ENCODE measurements at regions of chr5 and their contacts with region 1.

Region 1: DNA sequence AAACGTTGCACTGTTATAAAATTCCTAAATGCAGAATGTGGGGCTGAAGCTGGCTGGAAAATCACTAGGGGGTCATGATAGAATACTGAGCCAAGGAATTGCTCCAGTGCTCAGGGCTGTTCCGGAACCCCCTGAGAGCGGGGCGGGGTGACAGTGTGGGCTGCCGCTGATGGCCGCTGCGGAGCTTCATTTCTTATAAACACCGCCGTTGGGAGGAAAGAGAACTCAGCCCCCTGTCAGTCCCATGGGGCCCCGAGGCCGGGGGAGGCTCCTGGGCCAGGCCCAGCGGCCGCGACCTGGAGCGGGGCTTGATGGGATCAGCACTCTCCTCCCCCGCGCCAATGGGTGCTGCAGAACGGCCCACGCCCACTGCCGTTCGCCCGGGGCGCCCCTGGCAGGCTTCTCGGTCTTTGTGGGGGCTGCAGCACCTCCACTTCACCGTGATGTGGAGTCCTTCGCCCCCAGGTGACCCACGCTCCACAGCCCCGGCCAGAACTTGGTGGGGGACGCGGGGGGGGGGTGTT is 5.2 kb upstream of the IRF1 start:
- DNase-seq: peak; percentile 84
- H3K4me3 ChIP-seq: peak overlapping the region; percentile 69 to 78
- H3K27ac ChIP-seq: peak overlapping the region; percentile 96
- H3K4me1 ChIP-seq: peaks cover 24 to 29% of the 10 kb centered on the region in 2 experiments
- H3K27me3 ChIP-seq: no peaks in the 10 kb centered on the region
- CTCF ChIP-seq: 0 out of 2 replicates have a peak, but pooled peaks have one; percentile 11
- EP300 ChIP-seq: peak in 1 of 2 experiments; percentile 7; a peak in 1 of 4 replicates
- RAD21 ChIP-seq: no peak

Region 2: GRCh38 chr5:132386644-132387286 is 109.0 kb before region 1 on chr5:
- CTCF ChIA-PET with region 1: interaction called, 189 read pairs
- POLR2A ChIA-PET with region 1: no interaction called
- DNase-seq: peak; percentile 71
- H3K4me3 ChIP-seq: no peak overlapping the region
- H3K27ac ChIP-seq: peak overlapping the region; percentile 90; a peak in 3 of 4 replicates
- H3K4me1 ChIP-seq: peaks cover 26 to 32% of the 10 kb centered on the region in 2 experiments
- H3K27me3 ChIP-seq: no peaks in the 10 kb centered on the region
- CTCF ChIP-seq: peak; percentile 79
- EP300 ChIP-seq: no peak
- RAD21 ChIP-seq: peak; percentile 87

Region 3: GRCh38 chr5:132410451-132411381 is 85.0 kb before region 1 on chr5:
- CTCF ChIA-PET with region 1: interaction called, 95 read pairs
- POLR2A ChIA-PET with region 1: interaction called, 6 read pairs
- DNase-seq: peak; percentile 95
- H3K4me3 ChIP-seq: peak overlapping the region; percentile 71 to 76
- H3K27ac ChIP-seq: peak overlapping the region; percentile 81 to 89
- H3K4me1 ChIP-seq: peaks cover 19 to 26% of the 10 kb centered on the region in 2 experiments
- H3K27me3 ChIP-seq: no peaks in the 10 kb centered on the region
- CTCF ChIP-seq: peak; percentile 62
- EP300 ChIP-seq: 0 out of 4 replicates have a peak, but pooled peaks of 1 of the 2 experiments have one; percentile 6
- RAD21 ChIP-seq: peak; percentile 52

Region 4: GRCh38 chr5:132419502-132420468 is 75.9 kb before region 1 on chr5:
- CTCF ChIA-PET with region 1: interaction called, 95 read pairs
- POLR2A ChIA-PET with region 1: interaction called, 8 read pairs
- DNase-seq: peak; percentile 91
- H3K4me3 ChIP-seq: peak overlapping the region in 1 of 2 experiments; percentile 2; a peak in 1 of 4 replicates
- H3K27ac ChIP-seq: peak overlapping the region in 1 of 2 experiments; percentile 29; a peak in 1 of 4 replicates
- H3K4me1 ChIP-seq: peaks cover 7 to 23% of the 10 kb centered on the region in 2 experiments; a peak in 2 of 4 replicates
- H3K27me3 ChIP-seq: no peaks in the 10 kb centered on the region
- CTCF ChIP-seq: peak; percentile 87
- EP300 ChIP-seq: no peak
- RAD21 ChIP-seq: peak; percentile 80

Region 5: GRCh38 chr5:132426525-132427138 is 69.1 kb before region 1 on chr5:
- CTCF ChIA-PET with region 1: interaction called, 50 read pairs
- POLR2A ChIA-PET with region 1: interaction called, 15 read pairs
- DNase-seq: peak; percentile 67
- H3K4me3 ChIP-seq: no peak overlapping the region
- H3K27ac ChIP-seq: peak overlapping the region; percentile 78 to 80
- H3K4me1 ChIP-seq: peaks cover 39 to 62% of the 10 kb centered on the region in 2 experiments
- H3K27me3 ChIP-seq: no peaks in the 10 kb centered on the region
- CTCF ChIP-seq: peak; percentile 55
- EP300 ChIP-seq: peak in 1 of 2 experiments; percentile 60; a peak in 1 of 4 replicates
- RAD21 ChIP-seq: peak; percentile 46

Region 6: GRCh38 chr5:132506094-132506692 is 10.5 kb after region 1 on chr5:
- CTCF ChIA-PET with region 1: interaction called, 22 read pairs
- POLR2A ChIA-PET with region 1: interaction called, 3 read pairs
- DNase-seq: peak; percentile 48
- H3K4me3 ChIP-seq: peak overlapping the region in 1 of 2 experiments; percentile 4; a peak in 1 of 4 replicates
- H3K27ac ChIP-seq: peak overlapping the region; percentile 3 to 52; a peak in 3 of 4 replicates
- H3K4me1 ChIP-seq: no peaks in the 10 kb centered on the region; a peak in 1 of 4 replicates
- H3K27me3 ChIP-seq: no peaks in the 10 kb centered on the region
- CTCF ChIP-seq: peak; percentile 69
- EP300 ChIP-seq: no peak
- RAD21 ChIP-seq: peak; percentile 45